ENCODE measurements at regions of chr20 and their contacts with region 1.

Region 1: GRCh38 chr20:4038047-4038459 is 22.7 kb upstream of the RNF24 start:
- DNase-seq: peak; percentile 97 to 100 (median 98)
- H3K4me3 ChIP-seq: peak overlapping the region in 1 of 3 experiments; percentile 44
- H3K4me3 Mint-ChIP-seq: peak overlapping the region; percentile 68 to 93
- H3K27ac ChIP-seq: peak overlapping the region; percentile 92 to 95
- H3K27ac Mint-ChIP-seq: peak overlapping the region; percentile 98 to 100 (median 99)
- H3K4me1 ChIP-seq: peaks cover 23 to 31% of the 10 kb centered on the region in 2 donors
- H3K4me1 Mint-ChIP-seq: peaks cover 32% of the 10 kb centered on the region
- H3K27me3 ChIP-seq: no peaks in the 10 kb centered on the region
- H3K27me3 Mint-ChIP-seq: no peaks in the 10 kb centered on the region
- CTCF ChIP-seq: no peak

Region 2: GRCh38 chr20:4076671-4077070 is 38.6 kb after region 1 on chr20:
- intact Hi-C with region 1: loop called (anchors 5 kb)
- DNase-seq: no peak
- H3K4me3 ChIP-seq: no peak overlapping the region
- H3K4me3 Mint-ChIP-seq: no peak overlapping the region
- H3K27ac ChIP-seq: no peak overlapping the region
- H3K27ac Mint-ChIP-seq: peak overlapping the region in 3 of 7 donors; percentile 54 to 62 (median 60)
- H3K4me1 ChIP-seq: peaks cover 35 to 48% of the 10 kb centered on the region in 2 donors
- H3K4me1 Mint-ChIP-seq: peaks cover 49% of the 10 kb centered on the region
- H3K27me3 ChIP-seq: no peaks in the 10 kb centered on the region
- H3K27me3 Mint-ChIP-seq: peaks cover 0 to 1% (median 0%) of the 10 kb centered on the region in 3 donors
- CTCF ChIP-seq: no peak

Region 3: DNA sequence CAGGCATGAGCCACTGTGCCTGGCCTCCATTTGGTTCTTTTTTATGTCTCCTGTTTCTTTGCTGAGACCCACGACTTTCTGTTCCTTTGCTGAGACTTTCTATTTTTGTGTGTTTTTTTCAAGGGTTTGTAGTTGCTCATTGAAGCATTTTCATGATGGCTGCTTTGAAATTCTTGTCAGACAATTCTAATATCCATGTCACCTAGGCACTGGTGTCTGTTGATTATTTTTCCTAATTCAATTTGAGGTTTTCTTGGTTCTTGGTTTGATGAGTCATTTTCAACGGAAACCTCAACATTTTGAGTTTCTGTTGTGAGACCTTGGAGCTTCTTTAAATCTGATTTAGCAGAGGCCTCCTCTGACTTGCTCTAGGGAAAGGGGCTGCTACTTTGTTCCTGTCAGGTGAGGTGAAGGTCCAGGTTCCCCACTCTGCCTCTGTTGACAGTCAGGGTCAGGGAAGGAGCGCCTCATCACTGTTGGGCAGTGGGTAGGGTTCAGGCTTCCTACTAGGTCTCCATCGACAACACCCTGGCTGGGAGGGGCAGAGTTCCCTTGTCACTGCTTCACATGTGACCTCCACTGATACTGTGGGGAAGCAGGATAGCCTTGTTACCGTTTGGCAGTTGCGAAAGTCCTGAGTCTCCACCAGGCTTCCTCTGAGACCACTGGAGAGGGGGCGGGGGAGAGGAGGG is 44.5 kb after region 1 on chr20:
- intact Hi-C with region 1: loop called (anchors 5 kb)
- DNase-seq: peak; percentile 86 to 96 (median 93)
- H3K4me3 ChIP-seq: peak overlapping the region; percentile 6 to 50 (median 8)
- H3K4me3 Mint-ChIP-seq: peak overlapping the region; percentile 33 to 52
- H3K27ac ChIP-seq: peak overlapping the region; percentile 98 to 99
- H3K27ac Mint-ChIP-seq: peak overlapping the region; percentile 93 to 99 (median 96)
- H3K4me1 ChIP-seq: peaks cover 58 to 60% of the 10 kb centered on the region in 2 donors
- H3K4me1 Mint-ChIP-seq: peaks cover 57% of the 10 kb centered on the region
- H3K27me3 ChIP-seq: no peaks in the 10 kb centered on the region
- H3K27me3 Mint-ChIP-seq: peaks cover 0 to 2% (median 0%) of the 10 kb centered on the region in 3 donors
- CTCF ChIP-seq: no peak